ENCODE measurements at regions of chr6 and their contacts with region 1.

Region 1: GRCh38 chr6:126919947-126920346 is 198.5 kb upstream of the RSPO3 start:
- DNase-seq: peak; percentile 79
- H3K4me3 ChIP-seq: no peak overlapping the region
- H3K27ac ChIP-seq: peak overlapping the region; percentile 68
- H3K4me1 ChIP-seq: peaks cover 49% of the 10 kb centered on the region
- H3K27me3 ChIP-seq: no peaks in the 10 kb centered on the region
- CTCF ChIP-seq: no peak
- POLR2A ChIP-seq: no peak

Region 2: DNA sequence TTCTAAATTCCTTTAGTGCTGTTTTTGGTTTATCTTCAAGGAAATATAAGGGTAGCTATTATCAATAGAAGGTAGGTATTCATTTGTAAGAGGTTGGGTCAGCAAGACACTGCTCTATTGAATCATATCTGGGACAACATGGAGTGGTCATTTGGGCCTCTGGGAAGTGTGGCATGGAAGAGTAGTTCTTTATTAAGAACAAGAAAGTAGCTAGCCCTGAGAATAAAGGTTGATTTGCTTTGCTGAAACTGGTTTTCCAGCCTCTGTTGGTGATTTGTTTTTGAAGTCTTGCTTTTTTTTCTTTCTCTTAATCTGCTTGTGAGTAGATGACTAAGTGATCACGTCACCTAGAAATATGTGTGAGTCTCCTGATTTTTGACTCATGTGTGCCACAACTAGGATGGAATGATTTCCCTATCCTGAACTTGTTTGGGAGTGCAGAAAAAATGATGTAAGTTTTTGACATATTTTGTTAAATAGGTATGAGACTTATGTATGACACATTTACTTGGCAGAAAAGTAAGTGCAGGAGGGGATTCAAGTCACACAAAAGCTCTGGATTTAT is 198.3 kb before region 1 on chr6:
- CTCF ChIA-PET with region 1: no interaction called
- POLR2A ChIA-PET with region 1: no interaction called
- dilution Hi-C with region 1: no loop called
- intact Hi-C with region 1: loop called (anchors 5 kb)
- DNase-seq: peak; percentile 80
- H3K4me3 ChIP-seq: no peak overlapping the region
- H3K27ac ChIP-seq: peak overlapping the region; percentile 72
- H3K4me1 ChIP-seq: peaks cover 14% of the 10 kb centered on the region
- H3K27me3 ChIP-seq: no peaks in the 10 kb centered on the region
- CTCF ChIP-seq: no peak
- POLR2A ChIP-seq: no peak

Region 3: DNA sequence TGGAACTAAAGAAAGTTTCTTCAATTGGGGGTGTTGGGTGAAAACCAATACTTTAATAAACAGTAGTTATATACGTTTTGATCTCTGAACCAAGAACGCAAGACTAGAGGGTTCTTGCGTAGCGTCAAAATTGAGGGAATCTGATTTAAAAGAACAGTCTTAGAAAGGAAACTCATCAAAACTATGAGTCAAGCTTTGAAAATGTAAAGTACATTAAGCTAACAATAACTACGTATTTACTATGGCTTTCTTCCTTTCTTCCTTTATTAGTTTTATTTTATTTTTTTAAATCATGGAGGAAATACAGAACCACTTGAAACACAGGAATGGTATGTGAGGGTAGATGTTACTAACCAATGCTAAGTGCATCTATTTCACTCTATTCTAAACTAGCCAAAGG is 88.5 kb before region 1 on chr6:
- CTCF ChIA-PET with region 1: interaction called, 3 read pairs
- POLR2A ChIA-PET with region 1: no interaction called
- dilution Hi-C with region 1: no loop called
- intact Hi-C with region 1: loop called (anchors 2 kb)
- DNase-seq: peak; percentile 72
- H3K4me3 ChIP-seq: no peak overlapping the region
- H3K27ac ChIP-seq: peak overlapping the region; percentile 88
- H3K4me1 ChIP-seq: peaks cover 20% of the 10 kb centered on the region
- H3K27me3 ChIP-seq: no peaks in the 10 kb centered on the region
- CTCF ChIP-seq: no peak
- POLR2A ChIP-seq: no peak

Region 4: DNA sequence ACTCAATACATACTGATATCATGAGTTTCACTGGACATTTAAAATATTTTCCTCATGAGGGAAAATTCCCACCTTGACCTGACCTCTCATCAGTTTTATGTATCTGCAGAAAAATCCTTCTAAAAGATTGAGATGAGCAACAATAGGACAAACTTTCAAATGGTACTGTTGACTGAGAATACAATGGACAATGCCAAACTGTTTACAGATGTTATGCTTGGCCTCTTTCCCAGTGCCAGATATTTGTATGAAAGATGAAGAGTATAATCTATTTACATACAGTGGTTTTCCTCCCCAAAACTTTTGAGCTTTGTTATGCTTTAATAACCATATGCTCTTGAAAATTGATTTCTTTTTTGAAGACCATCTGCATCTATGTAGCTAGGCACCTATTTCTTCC is 46.6 kb before region 1 on chr6:
- CTCF ChIA-PET with region 1: no interaction called
- POLR2A ChIA-PET with region 1: no interaction called
- dilution Hi-C with region 1: no loop called
- intact Hi-C with region 1: loop called (anchors 5 kb)
- DNase-seq: peak; percentile 47
- H3K4me3 ChIP-seq: no peak overlapping the region
- H3K27ac ChIP-seq: no peak overlapping the region
- H3K4me1 ChIP-seq: peaks cover 14% of the 10 kb centered on the region
- H3K27me3 ChIP-seq: no peaks in the 10 kb centered on the region
- CTCF ChIP-seq: no peak
- POLR2A ChIP-seq: no peak

Region 5: DNA sequence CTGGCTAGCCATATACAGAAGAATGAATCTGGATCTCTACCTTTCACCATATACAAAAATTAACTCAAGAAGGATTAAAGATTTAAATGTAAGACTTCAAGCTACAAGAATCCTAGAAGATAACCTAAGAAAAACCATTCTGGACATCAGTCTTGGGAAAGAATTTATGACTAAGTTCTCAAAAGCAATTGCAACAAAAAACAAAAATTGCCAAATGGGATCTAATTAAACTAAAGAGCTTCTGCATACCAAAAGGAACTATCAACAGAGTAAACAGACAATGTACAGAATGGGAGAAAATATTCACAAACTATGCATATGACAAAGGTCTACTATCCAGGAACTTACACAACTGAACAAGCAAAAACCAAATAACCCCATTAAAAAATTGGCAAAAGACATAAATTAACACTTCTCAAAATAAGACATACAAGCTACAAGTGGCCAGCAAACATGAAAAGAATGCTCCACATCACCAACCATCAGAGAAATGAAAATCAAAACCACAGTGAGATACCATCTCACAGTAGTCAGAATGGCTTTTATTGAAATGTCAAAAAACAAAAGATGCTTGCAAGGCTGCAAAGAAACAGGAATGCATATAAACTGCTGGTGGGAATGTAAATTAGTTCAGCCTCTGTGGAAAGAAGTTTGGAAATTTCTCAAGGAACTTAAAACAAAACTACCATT is 131.8 kb after region 1 on chr6:
- CTCF ChIA-PET with region 1: no interaction called
- POLR2A ChIA-PET with region 1: no interaction called
- dilution Hi-C with region 1: no loop called
- intact Hi-C with region 1: loop called (anchors 1 kb)
- DNase-seq: no peak
- H3K4me3 ChIP-seq: no peak overlapping the region
- H3K27ac ChIP-seq: no peak overlapping the region
- H3K4me1 ChIP-seq: peaks cover 24% of the 10 kb centered on the region
- H3K27me3 ChIP-seq: no peaks in the 10 kb centered on the region
- CTCF ChIP-seq: no peak
- POLR2A ChIP-seq: no peak

Region 6: GRCh38 chr6:128379577-128379976 is 1459.6 kb after region 1 on chr6:
- CTCF ChIA-PET with region 1: no interaction called
- POLR2A ChIA-PET with region 1: no interaction called
- dilution Hi-C with region 1: no loop called
- intact Hi-C with region 1: no loop called
- DNase-seq: no peak
- H3K4me3 ChIP-seq: no peak overlapping the region
- H3K27ac ChIP-seq: no peak overlapping the region
- H3K4me1 ChIP-seq: no peaks in the 10 kb centered on the region
- H3K27me3 ChIP-seq: no peaks in the 10 kb centered on the region
- CTCF ChIP-seq: no peak
- POLR2A ChIP-seq: no peak